CD14-positive monocyte (primary cell): ENCODE measurements at regions of chr2 and their contacts with region 1.

Region 1: GRCh38 chr2:147560810-147561535 is 283.9 kb upstream of the ACVR2A start:
- DNase-seq: peak; percentile 86 to 94 (median 91)
- H3K4me3 ChIP-seq: peak overlapping the region; percentile 13 to 57 (median 33)
- H3K4me3 Mint-ChIP-seq: peak overlapping the region; percentile 12 to 15
- H3K27ac ChIP-seq: peak overlapping the region in 1 of 2 donors; percentile 86
- H3K27ac Mint-ChIP-seq: peak overlapping the region; percentile 80 to 93 (median 90)
- H3K4me1 ChIP-seq: peaks cover 29 to 41% of the 10 kb centered on the region in 2 donors
- H3K4me1 Mint-ChIP-seq: peaks cover 37% of the 10 kb centered on the region
- H3K27me3 ChIP-seq: no peaks in the 10 kb centered on the region
- H3K27me3 Mint-ChIP-seq: peaks cover 0 to 2% (median 0%) of the 10 kb centered on the region in 3 donors
- CTCF ChIP-seq: no peak

Region 2: DNA sequence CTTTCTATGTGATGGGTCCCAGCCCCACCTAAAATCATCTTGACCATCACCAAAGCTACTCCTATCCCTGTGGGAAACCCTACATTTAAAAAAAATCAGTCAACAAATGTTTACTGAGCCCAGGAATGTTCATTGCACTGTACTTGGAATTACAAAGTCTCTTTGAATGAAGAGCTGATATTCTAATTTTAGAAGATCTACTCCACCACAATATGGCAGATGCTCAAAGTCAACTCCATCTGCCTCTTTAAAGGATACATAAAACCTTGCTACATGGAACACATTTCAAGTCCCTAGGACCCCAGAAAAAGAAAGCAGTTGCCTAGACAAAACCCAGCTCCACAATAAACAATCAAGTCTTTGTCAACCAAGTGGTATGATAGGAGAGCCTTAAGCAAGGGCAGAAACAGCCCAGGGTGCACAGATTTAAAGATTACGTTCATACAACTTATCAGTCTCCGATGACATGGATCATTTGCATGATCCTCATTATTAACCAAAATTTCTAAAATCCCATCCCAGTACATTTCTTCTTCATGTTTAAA is 49.6 kb after region 1 on chr2:
- intact Hi-C with region 1: loop called in 1 of 2 experiments (anchors 10 kb)
- DNase-seq: no peak
- H3K4me3 ChIP-seq: no peak overlapping the region
- H3K4me3 Mint-ChIP-seq: no peak overlapping the region
- H3K27ac ChIP-seq: no peak overlapping the region
- H3K27ac Mint-ChIP-seq: no peak overlapping the region
- H3K4me1 ChIP-seq: no peaks in the 10 kb centered on the region
- H3K4me1 Mint-ChIP-seq: peaks cover 7% of the 10 kb centered on the region
- H3K27me3 ChIP-seq: no peaks in the 10 kb centered on the region
- H3K27me3 Mint-ChIP-seq: peaks cover 0 to 1% (median 1%) of the 10 kb centered on the region in 3 donors
- CTCF ChIP-seq: no peak

Region 3: DNA sequence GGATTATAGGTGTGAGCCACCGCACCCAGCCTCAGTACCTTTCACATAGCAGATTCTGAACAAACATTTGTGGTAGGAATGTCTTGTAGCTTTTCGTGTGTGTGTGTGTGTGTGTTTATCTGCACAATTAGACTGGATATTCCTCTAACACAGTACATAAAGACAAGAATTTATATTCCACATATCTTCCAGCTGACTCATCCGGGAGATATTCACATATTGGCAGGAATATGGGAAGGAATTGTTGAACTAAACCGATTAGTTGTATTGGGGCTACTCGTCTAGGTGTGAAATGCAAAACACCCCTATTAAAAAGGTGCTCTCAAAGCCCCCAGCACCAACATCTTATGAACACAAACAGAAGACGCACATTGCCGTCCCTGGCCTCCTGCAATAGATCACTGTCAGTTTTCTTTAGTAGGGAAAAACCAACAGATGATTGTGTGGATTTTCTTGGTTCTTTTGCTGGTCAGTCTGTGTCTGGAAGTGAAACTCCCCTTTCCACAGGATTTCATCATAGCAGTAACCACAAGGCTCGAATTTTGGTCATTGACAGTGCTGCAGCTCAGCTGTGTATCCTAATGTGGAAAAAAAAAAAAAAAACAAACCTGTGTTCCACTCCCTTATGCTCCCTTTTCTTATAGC is 75.4 kb after region 1 on chr2:
- intact Hi-C with region 1: loop called in 1 of 2 experiments (anchors 5 kb)
- DNase-seq: peak; percentile 86 to 95 (median 91)
- H3K4me3 ChIP-seq: peak overlapping the region in 2 of 3 experiments; percentile 32 to 62
- H3K4me3 Mint-ChIP-seq: peak overlapping the region; percentile 52 to 83
- H3K27ac ChIP-seq: peak overlapping the region; percentile 55 to 94
- H3K27ac Mint-ChIP-seq: peak overlapping the region; percentile 92 to 98 (median 95)
- H3K4me1 ChIP-seq: peaks cover 48 to 67% of the 10 kb centered on the region in 2 donors
- H3K4me1 Mint-ChIP-seq: peaks cover 5% of the 10 kb centered on the region
- H3K27me3 ChIP-seq: no peaks in the 10 kb centered on the region
- H3K27me3 Mint-ChIP-seq: peaks cover 0 to 1% (median 0%) of the 10 kb centered on the region in 3 donors
- CTCF ChIP-seq: no peak

Region 4: DNA sequence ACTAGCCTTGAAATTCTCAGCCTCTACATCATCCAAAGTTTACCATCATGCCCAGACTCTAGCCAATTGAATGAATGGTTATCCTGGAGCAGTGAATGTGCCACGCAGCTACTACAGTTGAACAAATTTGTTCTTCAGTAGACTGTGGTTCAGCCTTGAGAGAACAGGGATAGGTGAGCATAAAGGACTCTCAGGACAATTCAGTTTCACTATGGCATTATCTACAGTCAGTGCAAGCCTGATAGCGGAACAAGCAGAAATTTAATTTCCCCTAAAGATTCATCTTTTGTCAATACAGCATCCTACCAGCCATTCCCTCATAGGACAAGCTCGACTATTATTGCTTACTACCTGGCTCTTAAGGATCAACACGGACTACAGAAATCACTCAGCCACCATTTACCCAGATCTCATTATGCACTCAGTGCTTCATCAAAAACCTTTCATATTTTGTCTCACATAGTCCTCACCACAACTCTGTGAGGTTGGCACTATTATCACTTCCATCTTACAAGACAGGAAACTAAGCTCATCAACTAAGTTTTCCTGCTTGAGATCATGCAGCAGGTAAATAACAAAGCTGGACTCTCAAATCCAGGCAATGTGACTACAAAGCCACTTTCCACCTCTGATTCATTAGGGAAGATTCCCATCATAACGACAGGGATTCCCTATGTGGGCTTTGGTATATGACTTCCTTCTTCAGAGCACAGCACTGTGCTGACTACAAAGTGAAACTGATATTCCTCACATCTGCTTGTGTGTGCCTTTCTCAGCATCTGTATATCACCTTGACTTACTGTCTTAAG is 102.4 kb after region 1 on chr2:
- intact Hi-C with region 1: loop called in 1 of 2 experiments (anchors 10 kb)
- DNase-seq: peak in 2 of 3 donors; percentile 23 to 73
- H3K4me3 ChIP-seq: peak overlapping the region in 2 of 3 experiments; percentile 27 to 51
- H3K4me3 Mint-ChIP-seq: peak overlapping the region; percentile 47 to 60
- H3K27ac ChIP-seq: peak overlapping the region in 1 of 2 donors; percentile 67
- H3K27ac Mint-ChIP-seq: peak overlapping the region in 5 of 7 donors; percentile 18 to 64 (median 28)
- H3K4me1 ChIP-seq: peaks cover 17% of the 10 kb centered on the region in 2 donors
- H3K4me1 Mint-ChIP-seq: peaks cover 20% of the 10 kb centered on the region
- H3K27me3 ChIP-seq: no peaks in the 10 kb centered on the region
- H3K27me3 Mint-ChIP-seq: no peaks in the 10 kb centered on the region
- CTCF ChIP-seq: no peak

Region 5: GRCh38 chr2:147843864-147844696 is 283.1 kb after region 1 on chr2:
- intact Hi-C with region 1: loop called in 1 of 2 experiments (anchors 10 kb)
- DNase-seq: peak; percentile 83 to 87 (median 86)
- H3K4me3 ChIP-seq: peak overlapping the region; percentile 59 to 83 (median 74)
- H3K4me3 Mint-ChIP-seq: peak overlapping the region; percentile 91 to 98
- H3K27ac ChIP-seq: peak overlapping the region; percentile 77 to 83
- H3K27ac Mint-ChIP-seq: peak overlapping the region; percentile 89 to 95 (median 92)
- H3K4me1 ChIP-seq: peaks cover 26 to 33% of the 10 kb centered on the region in 2 donors
- H3K4me1 Mint-ChIP-seq: peaks cover 38% of the 10 kb centered on the region
- H3K27me3 ChIP-seq: peaks cover 58 to 64% of the 10 kb centered on the region in 2 donors
- H3K27me3 Mint-ChIP-seq: peaks cover 57 to 79% (median 58%) of the 10 kb centered on the region in 3 donors
- CTCF ChIP-seq: no peak